ENCODE measurements at regions of chr12 and their contacts with region 1.

Region 1: DNA sequence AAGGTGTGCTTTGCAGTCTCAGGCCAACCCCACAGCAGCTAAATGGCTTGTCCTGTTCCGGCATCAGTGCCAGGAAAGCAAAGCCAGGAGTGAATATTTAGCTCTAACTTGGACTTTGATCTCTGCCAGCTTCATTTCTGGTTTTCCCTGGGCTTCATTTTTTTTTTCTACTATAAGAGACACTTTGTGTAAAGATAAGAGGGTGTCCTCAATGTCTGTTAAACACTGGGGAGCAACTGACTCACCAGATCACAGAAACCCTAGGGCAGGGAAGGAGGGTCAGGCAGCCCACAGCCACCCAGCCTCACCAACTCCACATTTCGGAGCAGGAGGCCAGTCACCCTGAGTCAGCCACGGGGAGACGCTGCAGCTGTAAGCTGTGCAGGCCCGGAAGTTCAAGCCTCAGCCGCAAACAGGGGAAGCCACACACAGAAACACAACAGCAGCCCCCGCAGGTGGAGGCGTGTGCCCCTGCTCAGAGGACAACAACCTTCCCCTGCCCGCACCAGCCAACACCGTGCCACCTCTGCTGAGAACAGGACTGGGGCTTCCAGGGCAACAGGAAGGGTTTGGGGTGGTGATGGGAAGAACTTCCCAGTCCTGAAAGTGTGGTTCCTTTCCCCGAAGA is 6.3 kb downstream of the TNFRSF1A start:
- DNase-seq: peak; percentile 76 to 95
- H3K4me3 ChIP-seq: no peak overlapping the region
- CTCF ChIP-seq: peak in 1 of 3 donors; percentile 45
- POLR2A ChIP-seq: no peak

Region 2: GRCh38 chr12:6200266-6201198 is 135.0 kb before region 1 on chr12 and contains the start of gene CD9:
- intact Hi-C with region 1: no loop called
- DNase-seq: peak in 1 of 2 donors; percentile 96
- H3K4me3 ChIP-seq: peak within 1 kb of the TSS; percentile 76
- CTCF ChIP-seq: no peak
- POLR2A ChIP-seq: no peak
- total RNA-seq, gene CD9: 378 to 494 (median 412) TPM

Region 3: GRCh38 chr12:6376079-6376869 is 40.7 kb after region 1 on chr12:
- intact Hi-C with region 1: loop called (anchors 5 kb)
- DNase-seq: peak in 1 of 2 donors; percentile 91
- H3K4me3 ChIP-seq: no peak overlapping the region
- CTCF ChIP-seq: no peak
- POLR2A ChIP-seq: no peak

Region 4: GRCh38 chr12:6533923-6534694 is 198.5 kb after region 1 on chr12 and contains the start of gene GAPDH:
- intact Hi-C with region 1: loop called (anchors 10 kb)
- DNase-seq: peak; percentile 86 to 97
- H3K4me3 ChIP-seq: peak within 1 kb of the TSS; percentile 86
- CTCF ChIP-seq: no peak
- POLR2A ChIP-seq: peak in 1 of 2 donors; percentile 57
- total RNA-seq, gene GAPDH: 1,190 to 2,139 (median 1,514) TPM

Measured in lower leg skin (tissue), 4 donors.